ENCODE measurements at regions of chr13 and their contacts with region 1.

Region 1: DNA sequence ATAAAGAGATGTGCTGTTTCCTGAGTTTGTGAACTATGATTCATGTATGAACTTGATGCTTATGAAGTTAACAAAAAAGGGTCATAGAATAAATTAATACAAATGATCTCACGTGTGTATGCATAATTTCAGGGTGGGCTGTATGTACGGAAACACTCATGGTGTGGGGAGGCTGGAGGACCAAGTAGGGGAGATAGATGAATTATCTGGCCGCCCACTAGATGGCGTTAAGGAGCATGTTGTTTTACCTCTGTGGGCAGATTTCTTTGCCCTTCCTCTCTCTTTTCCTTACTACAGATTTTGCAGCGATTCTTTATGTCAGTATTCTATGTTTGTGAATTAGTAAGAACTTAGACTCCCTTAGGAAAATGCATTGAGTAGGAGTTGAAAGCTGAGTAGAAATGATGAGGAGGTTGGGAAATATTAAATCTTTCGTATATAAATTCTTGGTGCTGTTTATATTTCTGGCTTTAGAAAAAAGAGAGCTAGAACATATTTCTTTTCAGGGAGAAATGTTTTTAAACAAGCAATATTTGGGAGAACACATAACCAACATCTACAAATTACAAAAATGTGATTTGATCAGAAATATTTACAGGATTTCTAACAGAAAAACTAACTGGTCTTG is 47.4 kb upstream of the TMTC4 start:
- DNase-seq: peak in 1 of 3 donors; percentile 73
- ATAC-seq: peak; percentile 40
- H3K4me3 ChIP-seq: no peak overlapping the region
- H3K4me1 ChIP-seq: no peaks in the 10 kb centered on the region
- CTCF ChIP-seq: peak; percentile 25

Region 2: GRCh38 chr13:100941377-100942368 is 219.7 kb after region 1 on chr13:
- intact Hi-C with region 1: no loop called
- DNase-seq: no peak
- ATAC-seq: no peak
- H3K4me3 ChIP-seq: no peak overlapping the region
- H3K4me1 ChIP-seq: no peaks in the 10 kb centered on the region
- CTCF ChIP-seq: no peak

Region 3: GRCh38 chr13:101109005-101109404 is 387.0 kb after region 1 on chr13:
- intact Hi-C with region 1: loop called in 1 of 2 experiments (anchors 10 kb)
- DNase-seq: no peak
- ATAC-seq: no peak
- H3K4me3 ChIP-seq: no peak overlapping the region
- H3K4me1 ChIP-seq: no peaks in the 10 kb centered on the region
- CTCF ChIP-seq: no peak

Region 4: GRCh38 chr13:101155920-101156319 is 433.9 kb after region 1 on chr13:
- intact Hi-C with region 1: no loop called
- DNase-seq: no peak
- ATAC-seq: no peak
- H3K4me3 ChIP-seq: no peak overlapping the region
- H3K4me1 ChIP-seq: no peaks in the 10 kb centered on the region
- CTCF ChIP-seq: no peak

Region 5: GRCh38 chr13:101272886-101273285 is 550.9 kb after region 1 on chr13:
- intact Hi-C with region 1: no loop called
- DNase-seq: no peak
- ATAC-seq: no peak
- H3K4me3 ChIP-seq: no peak overlapping the region
- H3K4me1 ChIP-seq: no peaks in the 10 kb centered on the region
- CTCF ChIP-seq: no peak

Measured in mucosa of descending colon (tissue), 3 donors.